GM18951 (cell line): ENCODE measurements at regions of chr7 and their contacts with region 1.

Region 1: DNA sequence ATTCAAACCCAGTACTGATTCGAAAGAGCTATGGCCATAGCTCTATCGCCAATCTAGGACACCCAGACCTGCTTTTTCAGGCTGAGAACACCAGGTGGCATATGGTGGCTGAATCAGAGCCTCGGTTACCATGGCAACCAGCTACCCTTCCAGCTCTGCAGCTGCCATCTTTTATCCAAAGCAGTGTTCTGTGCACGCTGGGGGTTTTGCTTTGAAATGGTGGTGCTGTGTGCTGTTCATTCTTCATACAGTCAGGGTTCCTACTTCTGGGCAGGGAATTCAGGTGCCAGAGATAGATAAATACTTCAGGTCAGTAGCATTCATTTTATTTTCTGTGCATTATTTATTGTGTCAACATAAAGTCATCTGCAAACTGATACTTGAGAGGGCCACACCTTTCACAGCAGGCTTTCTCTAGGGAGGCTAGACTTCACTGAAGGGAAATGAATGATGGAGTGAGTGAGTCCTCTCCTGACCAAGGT is 85.4 kb downstream of the AKR1D1 start:
- POLR2A ChIP-seq: no peak

Region 2: GRCh38 chr7:138449580-138449979 is 287.9 kb after region 1 on chr7:
- in situ Hi-C with region 1: loop called (anchors 25 kb)
- POLR2A ChIP-seq: no peak